Dendritic cell treated with granulocyte-macrophage colony-stimulating factor and Interleukin-4, amounts not matched to agents 40 ng/mL and 50 ng/mL, for 4 days (primary cell): ENCODE measurements at regions of chr3 and their contacts with region 1.

Region 1: GRCh38 chr3:197906023-197906849 is 43.8 kb upstream of the RPL35A start:
- H3K4me3 Mint-ChIP-seq: peak overlapping the region; percentile 50
- H3K27ac Mint-ChIP-seq: no peak overlapping the region
- H3K4me1 Mint-ChIP-seq: peaks cover 6% of the 10 kb centered on the region
- H3K27me3 Mint-ChIP-seq: no peaks in the 10 kb centered on the region

Region 2: DNA sequence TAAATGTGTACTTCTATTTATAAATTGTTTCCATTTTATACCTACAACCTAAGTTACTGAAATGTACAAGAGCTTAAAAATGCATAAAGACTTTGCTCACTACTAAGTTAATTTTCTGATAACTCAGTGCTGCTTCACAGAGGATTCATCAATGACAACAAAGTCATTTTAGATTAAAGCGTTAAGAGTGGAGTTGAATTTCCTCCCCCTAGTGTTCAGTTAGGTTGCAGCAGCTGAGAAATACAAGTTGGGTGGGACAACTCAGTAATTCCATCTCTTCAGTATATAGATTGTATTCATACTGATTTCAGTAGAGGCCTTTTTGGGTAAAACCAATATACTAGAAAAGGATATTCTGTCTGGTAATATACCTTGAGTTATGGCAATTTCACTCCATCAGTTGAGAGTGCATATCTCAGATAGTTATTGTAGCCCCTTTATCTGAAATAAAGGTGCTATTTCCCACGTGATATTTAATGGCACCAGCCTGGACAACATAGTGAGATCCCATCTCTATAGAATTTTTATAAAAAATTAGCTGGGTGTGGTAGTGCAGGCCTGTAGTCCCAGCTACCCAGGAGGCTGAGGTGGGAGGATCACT is 36.8 kb after region 1 on chr3:
- intact Hi-C with region 1: loop called (anchors 2 kb)
- H3K4me3 Mint-ChIP-seq: no peak overlapping the region
- H3K27ac Mint-ChIP-seq: no peak overlapping the region
- H3K4me1 Mint-ChIP-seq: no peaks in the 10 kb centered on the region
- H3K27me3 Mint-ChIP-seq: peaks cover 1% of the 10 kb centered on the region

Region 3: DNA sequence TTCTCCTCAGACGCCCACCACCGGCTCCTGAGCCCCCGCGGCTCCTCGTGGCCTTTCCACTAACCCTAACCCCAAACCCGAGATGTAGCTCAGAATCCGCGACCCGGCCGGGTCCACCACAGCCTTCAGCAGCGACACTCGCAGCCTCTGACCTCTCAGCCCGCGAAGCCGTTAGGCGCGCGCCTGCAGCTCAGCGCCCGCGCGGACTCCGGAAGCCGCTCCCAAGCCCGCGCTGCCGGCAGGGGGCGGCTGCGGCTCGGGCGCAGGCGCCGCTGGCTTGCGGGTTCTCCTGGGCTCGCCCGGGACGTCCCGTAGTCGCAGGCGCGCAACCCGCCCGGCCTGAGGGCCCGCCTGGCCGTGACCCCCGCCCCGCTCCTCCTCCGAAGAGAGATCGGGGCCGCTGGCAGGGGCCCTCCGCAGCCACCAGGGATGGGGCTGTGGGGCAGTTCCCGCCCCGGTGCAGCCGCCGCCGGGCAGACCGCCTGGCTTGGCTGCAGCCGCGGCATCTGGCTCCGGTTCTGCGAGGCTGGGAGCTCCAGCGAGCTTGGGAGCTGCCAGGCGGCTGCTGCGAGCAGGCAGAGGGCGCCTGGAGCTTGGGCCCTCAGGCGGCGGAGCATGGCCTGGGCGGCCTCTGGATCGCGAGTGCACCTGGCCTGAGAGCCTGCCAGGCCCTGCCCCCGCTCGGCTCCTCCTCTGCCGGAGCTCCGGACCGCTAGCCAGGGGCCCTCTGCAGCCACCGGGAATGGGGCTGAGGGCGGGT is 174.5 kb after region 1 on chr3:
- intact Hi-C with region 1: loop called (anchors 10 kb)
- H3K4me3 Mint-ChIP-seq: peak overlapping the region; percentile 77
- H3K27ac Mint-ChIP-seq: peak overlapping the region; percentile 65
- H3K4me1 Mint-ChIP-seq: no peaks in the 10 kb centered on the region
- H3K27me3 Mint-ChIP-seq: peaks cover 66% of the 10 kb centered on the region